SK-N-SH (cell line): ENCODE measurements at regions of chr14 and their contacts with region 1.

Region 1: GRCh38 chr14:34331728-34332623 is 130.1 kb downstream of the SPTSSA start:
- DNase-seq: peak; percentile 68
- H3K4me3 ChIP-seq: no peak overlapping the region
- H3K27ac ChIP-seq: no peak overlapping the region
- H3K4me1 ChIP-seq: peaks cover 0 to 2% of the 10 kb centered on the region in 2 experiments; a peak in 1 of 4 replicates
- H3K27me3 ChIP-seq: no peaks in the 10 kb centered on the region
- CTCF ChIP-seq: peak; percentile 86
- EP300 ChIP-seq: no peak
- RAD21 ChIP-seq: peak; percentile 81

Region 2: GRCh38 chr14:33692762-33693161 is 639.2 kb before region 1 on chr14:
- CTCF ChIA-PET with region 1: no interaction called
- POLR2A ChIA-PET with region 1: no interaction called
- DNase-seq: no peak
- H3K4me3 ChIP-seq: no peak overlapping the region; a peak in 2 of 4 replicates
- H3K27ac ChIP-seq: peak overlapping the region; percentile 81 to 92; a peak in 3 of 4 replicates
- H3K4me1 ChIP-seq: peaks cover 3 to 18% of the 10 kb centered on the region in 2 experiments
- H3K27me3 ChIP-seq: no peaks in the 10 kb centered on the region
- CTCF ChIP-seq: no peak
- EP300 ChIP-seq: peak; percentile 53 to 94; a peak in 3 of 4 replicates
- RAD21 ChIP-seq: no peak

Region 3: DNA sequence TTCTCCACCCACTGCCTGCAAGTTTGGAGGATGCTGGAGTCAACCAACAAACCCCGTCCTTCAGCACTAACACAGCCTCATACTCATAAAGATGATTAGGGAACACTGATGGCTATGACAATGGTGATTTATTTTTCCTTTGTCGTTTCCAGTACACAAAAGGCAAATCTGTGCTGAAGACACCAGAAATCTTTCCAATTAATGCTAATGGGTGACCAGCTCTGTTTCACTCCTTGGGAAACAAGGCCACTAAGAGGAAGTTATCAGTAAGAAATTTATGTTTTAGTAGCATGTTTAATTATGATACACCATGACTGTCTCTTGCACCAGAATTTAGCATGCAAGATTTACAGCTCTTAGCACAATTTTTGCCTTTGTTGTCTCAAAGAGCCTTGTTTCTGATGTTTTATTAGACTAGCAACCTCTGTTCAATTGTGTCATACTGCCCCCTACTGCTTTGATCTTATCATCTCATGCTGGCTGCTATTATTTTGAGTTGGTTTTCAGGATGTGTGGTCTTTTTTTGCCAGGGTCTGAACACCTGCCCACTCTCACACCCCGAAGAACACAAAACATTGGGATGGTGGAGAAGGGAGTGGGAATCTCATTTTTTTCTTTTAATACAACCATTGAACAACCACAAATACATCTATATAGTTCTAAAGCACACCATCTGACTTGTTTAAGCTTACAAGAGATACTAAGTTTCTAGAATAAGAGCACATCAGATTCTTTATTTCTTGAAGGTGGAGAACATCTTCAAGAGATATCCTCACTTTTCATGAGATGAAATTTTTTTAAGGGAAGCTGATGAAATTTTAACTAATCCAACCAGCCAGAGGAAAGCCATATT is 30.9 kb before region 1 on chr14:
- CTCF ChIA-PET with region 1: interaction called, 12 read pairs
- POLR2A ChIA-PET with region 1: no interaction called
- DNase-seq: peak; percentile 49
- H3K4me3 ChIP-seq: no peak overlapping the region; a peak in 1 of 4 replicates
- H3K27ac ChIP-seq: no peak overlapping the region
- H3K4me1 ChIP-seq: no peaks in the 10 kb centered on the region; a peak in 1 of 4 replicates
- H3K27me3 ChIP-seq: no peaks in the 10 kb centered on the region; the same call in 1 of the 2 replicates
- CTCF ChIP-seq: peak; percentile 61
- EP300 ChIP-seq: no peak
- RAD21 ChIP-seq: peak; percentile 67

Region 4: GRCh38 chr14:34350903-34351302 is 18.9 kb after region 1 on chr14:
- CTCF ChIA-PET with region 1: interaction called, 11 read pairs
- POLR2A ChIA-PET with region 1: no interaction called
- DNase-seq: no peak
- H3K4me3 ChIP-seq: no peak overlapping the region
- H3K27ac ChIP-seq: no peak overlapping the region
- H3K4me1 ChIP-seq: peaks cover 3 to 4% of the 10 kb centered on the region in 2 experiments; a peak in 2 of 4 replicates
- H3K27me3 ChIP-seq: no peaks in the 10 kb centered on the region
- CTCF ChIP-seq: no peak
- EP300 ChIP-seq: no peak
- RAD21 ChIP-seq: no peak

Region 5: DNA sequence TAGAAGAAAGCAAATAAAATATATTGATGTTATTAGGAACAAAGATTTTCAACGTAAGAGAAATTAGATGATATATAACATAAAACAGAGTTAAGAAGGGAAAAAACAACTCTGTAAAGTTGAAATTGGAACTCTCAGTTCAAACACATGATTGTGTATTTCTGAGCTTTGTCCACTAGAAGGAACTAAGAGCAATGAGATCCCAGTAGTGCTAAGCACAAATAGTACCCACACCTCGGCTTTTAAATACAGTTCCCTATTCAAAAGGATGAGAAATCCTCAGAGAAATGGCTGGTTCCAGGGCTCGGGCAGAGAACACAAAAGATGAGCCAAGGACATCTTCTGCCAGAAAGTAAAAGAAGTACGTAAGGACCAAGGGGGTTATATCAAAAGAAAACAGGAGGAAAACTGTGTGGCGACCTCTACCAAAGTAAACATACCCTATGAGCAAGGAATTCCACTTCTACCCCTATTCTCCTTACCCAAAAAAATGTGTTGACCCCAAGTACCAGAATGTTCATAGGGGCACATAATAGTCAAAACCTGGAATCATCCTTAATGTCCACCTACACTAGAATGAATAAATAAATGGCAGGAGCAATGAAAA is 33.4 kb after region 1 on chr14:
- CTCF ChIA-PET with region 1: interaction called, 15 read pairs
- POLR2A ChIA-PET with region 1: no interaction called
- DNase-seq: no peak
- H3K4me3 ChIP-seq: no peak overlapping the region
- H3K27ac ChIP-seq: no peak overlapping the region
- H3K4me1 ChIP-seq: peaks cover 5 to 7% of the 10 kb centered on the region in 2 experiments; a peak in 3 of 4 replicates
- H3K27me3 ChIP-seq: no peaks in the 10 kb centered on the region
- CTCF ChIP-seq: no peak
- EP300 ChIP-seq: no peak
- RAD21 ChIP-seq: peak; percentile 51

Region 6: GRCh38 chr14:34496679-34497513 is 164.9 kb after region 1 on chr14:
- CTCF ChIA-PET with region 1: interaction called, 70 read pairs
- POLR2A ChIA-PET with region 1: no interaction called
- DNase-seq: peak; percentile 23
- H3K4me3 ChIP-seq: no peak overlapping the region
- H3K27ac ChIP-seq: peak overlapping the region; percentile 56 to 98
- H3K4me1 ChIP-seq: peaks cover 0 to 13% of the 10 kb centered on the region in 2 experiments; a peak in 2 of 4 replicates
- H3K27me3 ChIP-seq: no peaks in the 10 kb centered on the region
- CTCF ChIP-seq: peak; percentile 52
- EP300 ChIP-seq: peak in 1 of 2 experiments; percentile 78; a peak in 1 of 4 replicates
- RAD21 ChIP-seq: no peak

Region 7: DNA sequence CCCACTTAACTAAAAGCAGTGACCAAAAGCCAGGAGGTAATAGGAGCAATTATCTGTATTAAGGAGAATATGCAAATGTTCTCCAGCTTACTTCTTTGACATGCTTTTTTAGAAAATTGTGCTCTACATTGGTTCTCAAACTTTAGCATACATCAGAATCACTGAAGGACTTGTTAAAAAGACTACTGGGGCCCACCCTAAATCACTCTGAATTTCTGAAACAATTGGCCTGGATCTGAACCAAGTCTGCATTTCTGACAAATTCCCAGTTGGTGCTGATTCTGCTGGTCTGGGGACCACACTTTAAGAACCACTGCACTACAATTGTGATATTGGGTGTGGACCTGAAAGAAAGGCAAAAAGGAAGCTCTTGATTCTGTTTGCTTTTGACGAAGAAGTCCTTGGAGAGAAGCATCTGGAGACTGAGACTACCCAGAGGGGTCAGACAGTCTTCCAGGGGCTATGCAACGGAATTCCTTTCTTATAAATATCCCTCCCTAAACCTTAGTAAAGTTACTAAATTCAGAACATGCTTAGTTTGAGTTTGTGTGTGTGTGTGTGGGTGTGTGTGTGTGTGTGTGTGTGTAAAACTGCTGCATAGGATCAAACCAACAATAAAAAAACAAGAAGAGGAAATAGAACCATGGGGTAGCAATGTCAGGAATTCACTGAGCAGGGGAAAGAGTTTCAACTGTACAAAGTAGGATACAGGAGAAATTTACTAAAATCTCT is 170.7 kb after region 1 on chr14:
- CTCF ChIA-PET with region 1: interaction called, 70 read pairs
- POLR2A ChIA-PET with region 1: no interaction called
- DNase-seq: no peak
- H3K4me3 ChIP-seq: no peak overlapping the region
- H3K27ac ChIP-seq: peak overlapping the region in 1 of 2 experiments; percentile 59; a peak in 2 of 4 replicates
- H3K4me1 ChIP-seq: peaks cover 0 to 22% of the 10 kb centered on the region in 2 experiments; a peak in 2 of 4 replicates
- H3K27me3 ChIP-seq: no peaks in the 10 kb centered on the region
- CTCF ChIP-seq: no peak
- EP300 ChIP-seq: no peak
- RAD21 ChIP-seq: no peak